Adrenal gland (tissue), 19 donors: ENCODE measurements at regions of chr10 and their contacts with region 1.

Region 1: GRCh38 chr10:38025283-38025682 is 14.8 kb downstream of the ZNF33A start:
- DNase-seq: no peak
- H3K4me3 ChIP-seq: no peak overlapping the region
- H3K27ac ChIP-seq: no peak overlapping the region
- H3K4me1 ChIP-seq: no peaks in the 10 kb centered on the region
- H3K27me3 ChIP-seq: no peaks in the 10 kb centered on the region
- CTCF ChIP-seq: no peak
- POLR2A ChIP-seq: no peak

Region 2: GRCh38 chr10:37734976-37735375 is 290.3 kb before region 1 on chr10:
- intact Hi-C with region 1: no loop called
- DNase-seq: peak; percentile 53 to 80 (median 73)
- H3K4me3 ChIP-seq: no peak overlapping the region
- H3K27ac ChIP-seq: peak overlapping the region in 3 of 5 donors; percentile 63 to 73 (median 66)
- H3K4me1 ChIP-seq: peaks cover 18 to 22% of the 10 kb centered on the region in 2 donors
- H3K27me3 ChIP-seq: no peaks in the 10 kb centered on the region
- CTCF ChIP-seq: no peak
- POLR2A ChIP-seq: peak in 1 of 2 donors; percentile 13

Region 3: GRCh38 chr10:37976091-37976879 is 49.0 kb before region 1 on chr10 and contains the start of gene ZNF25:
- intact Hi-C with region 1: loop called in 1 of 2 experiments (anchors 10 kb)
- DNase-seq: peak; percentile 97 to 100 (median 99)
- H3K4me3 ChIP-seq: peak within 1 kb of the TSS; percentile 72 to 98 (median 82)
- H3K27ac ChIP-seq: peak within 1 kb of the TSS; percentile 89 to 100 (median 96)
- H3K4me1 ChIP-seq: peaks cover 11 to 19% of the 10 kb centered on the region in 2 donors
- H3K27me3 ChIP-seq: no peaks in the 10 kb centered on the region
- CTCF ChIP-seq: peak; percentile 80 to 97 (median 90)
- POLR2A ChIP-seq: peak; percentile 75 to 89
- total RNA-seq, gene ZNF25: 5.3 to 20.3 (median 11.1) TPM

Region 4: DNA sequence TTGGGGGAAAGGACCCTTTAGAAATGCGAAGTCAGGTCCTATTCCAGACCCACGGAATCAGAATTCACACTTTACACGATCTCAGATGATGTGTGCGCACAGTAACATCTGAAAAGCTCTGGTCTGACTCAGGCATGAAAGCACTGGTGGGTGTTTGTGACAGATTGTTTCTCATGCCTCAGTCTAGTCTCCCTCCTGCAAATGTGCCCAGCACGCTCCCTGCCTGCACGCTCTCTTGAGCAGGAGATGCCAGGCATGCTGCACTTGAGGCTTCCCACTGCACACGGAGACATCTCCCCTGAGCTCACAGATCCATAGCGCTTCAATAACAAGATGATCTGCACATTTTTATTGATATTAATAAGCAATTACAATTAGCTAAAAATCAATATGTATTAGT is 45.2 kb after region 1 on chr10:
- intact Hi-C with region 1: no loop called
- DNase-seq: no peak
- H3K4me3 ChIP-seq: no peak overlapping the region
- H3K27ac ChIP-seq: no peak overlapping the region
- H3K4me1 ChIP-seq: no peaks in the 10 kb centered on the region
- H3K27me3 ChIP-seq: no peaks in the 10 kb centered on the region
- CTCF ChIP-seq: no peak
- POLR2A ChIP-seq: no peak